PC-9 (cell line): ENCODE measurements at regions of chr17 and their contacts with region 1.

Region 1: GRCh38 chr17:79915850-79916430 is 76.7 kb upstream of the CBX4 start:
- DNase-seq: peak; percentile 87 to 97
- H3K4me3 ChIP-seq: no peak overlapping the region
- H3K27ac ChIP-seq: no peak overlapping the region
- H3K4me1 ChIP-seq: peaks cover 42% of the 10 kb centered on the region
- H3K27me3 ChIP-seq: no peaks in the 10 kb centered on the region
- CTCF ChIP-seq: peak; percentile 64

Region 2: GRCh38 chr17:78993241-78993956 is 922.5 kb before region 1 on chr17:
- CTCF ChIA-PET with region 1: no interaction called
- POLR2A ChIA-PET with region 1: interaction called, 14 read pairs
- intact Hi-C with region 1: no loop called
- DNase-seq: peak in 1 of 2 experiments; percentile 44
- H3K4me3 ChIP-seq: no peak overlapping the region
- H3K27ac ChIP-seq: no peak overlapping the region
- H3K4me1 ChIP-seq: peaks cover 35% of the 10 kb centered on the region
- H3K27me3 ChIP-seq: no peaks in the 10 kb centered on the region
- CTCF ChIP-seq: peak; percentile 78

Region 3: GRCh38 chr17:79747508-79748295 is 168.2 kb before region 1 on chr17:
- CTCF ChIA-PET with region 1: interaction called, 5 read pairs
- POLR2A ChIA-PET with region 1: no interaction called
- intact Hi-C with region 1: loop called (anchors 2 kb)
- DNase-seq: no peak
- H3K4me3 ChIP-seq: no peak overlapping the region
- H3K27ac ChIP-seq: no peak overlapping the region
- H3K4me1 ChIP-seq: peaks cover 32% of the 10 kb centered on the region
- H3K27me3 ChIP-seq: no peaks in the 10 kb centered on the region
- CTCF ChIP-seq: no peak

Region 4: GRCh38 chr17:79839363-79840268 is 76.3 kb before region 1 on chr17 and contains the start of gene CBX4:
- CTCF ChIA-PET with region 1: interaction called, 9 read pairs
- POLR2A ChIA-PET with region 1: no interaction called
- intact Hi-C with region 1: loop called (anchors 1 kb)
- DNase-seq: peak; percentile 71 to 93
- H3K4me3 ChIP-seq: peak within 1 kb of the TSS; percentile 86
- H3K27ac ChIP-seq: peak within 1 kb of the TSS; percentile 83
- H3K4me1 ChIP-seq: peaks cover 15% of the 10 kb centered on the region
- H3K27me3 ChIP-seq: peaks cover 4% of the 10 kb centered on the region; the same call in 1 of the 2 replicates
- CTCF ChIP-seq: peak; percentile 83
- total RNA-seq, gene CBX4: 32.0 and 33.1 TPM in 2 replicates

Region 5: GRCh38 chr17:79991140-79991923 is 75.4 kb after region 1 on chr17:
- CTCF ChIA-PET with region 1: no interaction called
- POLR2A ChIA-PET with region 1: no interaction called
- intact Hi-C with region 1: loop called (anchors 5 kb)
- DNase-seq: peak; percentile 48 to 81
- H3K4me3 ChIP-seq: no peak overlapping the region
- H3K27ac ChIP-seq: no peak overlapping the region
- H3K4me1 ChIP-seq: peaks cover 45% of the 10 kb centered on the region
- H3K27me3 ChIP-seq: no peaks in the 10 kb centered on the region
- CTCF ChIP-seq: peak; percentile 41; the same call in 1 of the 2 replicates